Mammary epithelial cell (primary cell): ENCODE measurements at regions of chr12 and their contacts with region 1.

Region 1: GRCh38 chr12:69688496-69689427 is 10.3 kb downstream of the BEST3 start:
- DNase-seq: peak; percentile 91
- H3K4me3 ChIP-seq: no peak overlapping the region
- H3K27ac ChIP-seq: peak overlapping the region; percentile 73
- H3K4me1 ChIP-seq: peaks cover 43% of the 10 kb centered on the region
- H3K27me3 ChIP-seq: no peaks in the 10 kb centered on the region
- CTCF ChIP-seq: no peak

Region 2: GRCh38 chr12:69738351-69739286 is 49.9 kb after region 1 on chr12 and contains the start of gene RAB3IP:
- CTCF ChIA-PET with region 1: no interaction called
- dilution Hi-C with region 1: no loop called
- in situ Hi-C with region 1: no loop called
- intact Hi-C with region 1: loop called (anchors 2 kb)
- DNase-seq: peak; percentile 86
- H3K4me3 ChIP-seq: peak within 1 kb of the TSS; percentile 88 to 97 (median 96)
- H3K27ac ChIP-seq: peak within 1 kb of the TSS; percentile 95
- H3K4me1 ChIP-seq: peaks cover 6% of the 10 kb centered on the region
- H3K27me3 ChIP-seq: no peaks in the 10 kb centered on the region
- CTCF ChIP-seq: peak; percentile 16 to 60
- total RNA-seq, gene RAB3IP: 22.3 to 33.1 TPM